Ascending aorta (tissue), 2 donors: ENCODE measurements at regions of chr9 and their contacts with region 1.

Region 1: GRCh38 chr9:21031091-21031807 is at the start of gene HACD4:
- DNase-seq: peak in 1 of 2 donors; percentile 79
- H3K4me3 ChIP-seq: peak within 1 kb of the TSS; percentile 66 to 79
- H3K27ac ChIP-seq: peak within 1 kb of the TSS; percentile 77 to 82
- H3K4me1 ChIP-seq: peaks cover 0 to 4% of the 10 kb centered on the region in 2 donors
- H3K27me3 ChIP-seq: no peaks in the 10 kb centered on the region
- CTCF ChIP-seq: peak in 1 of 3 experiments; percentile 4
- total RNA-seq, gene HACD4: 4.6 TPM

Region 2: DNA sequence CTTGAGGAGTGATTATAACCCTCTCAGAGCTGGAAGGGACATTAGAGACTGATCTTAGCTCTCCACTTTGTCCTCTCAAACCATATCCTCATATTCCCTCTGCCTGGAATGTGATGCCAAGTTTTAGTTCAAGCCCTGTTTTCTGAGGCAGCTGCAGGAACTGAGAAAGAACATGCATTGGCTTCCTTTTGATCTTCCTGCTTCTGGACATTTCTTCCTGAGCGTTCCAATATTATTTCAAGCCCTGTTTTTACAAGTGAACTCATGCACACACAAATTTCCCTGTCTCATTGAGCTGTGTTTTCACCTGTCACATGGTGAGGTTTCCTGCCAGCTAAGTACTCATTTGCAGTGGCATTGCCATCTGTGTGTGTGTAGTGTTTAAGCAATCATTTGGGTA is 330.2 kb before region 1 on chr9:
- intact Hi-C with region 1: no loop called
- DNase-seq: no peak
- H3K4me3 ChIP-seq: no peak overlapping the region
- H3K27ac ChIP-seq: no peak overlapping the region
- H3K4me1 ChIP-seq: peaks cover 0 to 5% of the 10 kb centered on the region in 2 donors
- H3K27me3 ChIP-seq: no peaks in the 10 kb centered on the region
- CTCF ChIP-seq: no peak

Region 3: GRCh38 chr9:20962536-20963225 is 68.6 kb before region 1 on chr9:
- intact Hi-C with region 1: no loop called
- DNase-seq: no peak
- H3K4me3 ChIP-seq: no peak overlapping the region
- H3K27ac ChIP-seq: no peak overlapping the region
- H3K4me1 ChIP-seq: no peaks in the 10 kb centered on the region
- H3K27me3 ChIP-seq: no peaks in the 10 kb centered on the region
- CTCF ChIP-seq: no peak

Region 4: DNA sequence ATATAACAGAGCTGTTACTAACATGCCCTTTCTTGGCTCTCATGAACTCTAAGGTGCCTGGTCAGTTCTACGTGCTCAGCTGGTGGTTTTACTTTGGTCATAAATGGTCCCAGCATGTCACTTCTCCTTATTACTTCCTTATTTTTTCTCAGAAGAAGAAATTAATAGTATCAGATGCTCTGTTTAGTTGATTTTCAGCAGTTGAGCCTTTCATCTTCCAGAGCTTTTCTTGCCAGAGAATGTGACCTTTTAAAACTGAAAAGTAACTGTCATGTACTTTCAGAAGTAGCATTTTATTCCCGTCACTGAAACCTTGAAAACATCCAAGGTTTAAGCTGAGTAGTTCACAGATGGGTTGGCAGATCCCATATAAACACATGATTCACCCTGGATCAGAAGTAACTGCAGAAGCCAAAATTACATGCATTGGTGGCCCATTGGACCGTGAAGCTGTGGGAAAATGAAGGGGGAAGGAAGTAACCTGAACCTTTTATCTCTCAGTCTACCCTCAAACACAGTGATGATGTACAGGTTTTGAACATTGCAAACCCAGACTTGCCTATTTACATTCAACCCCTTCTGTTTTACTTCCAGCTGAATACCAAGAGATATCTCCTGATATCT is 50.3 kb before region 1 on chr9:
- intact Hi-C with region 1: loop called (anchors 5 kb)
- DNase-seq: no peak
- H3K4me3 ChIP-seq: peak overlapping the region; percentile 26 to 31
- H3K27ac ChIP-seq: peak overlapping the region; percentile 64 to 71
- H3K4me1 ChIP-seq: peaks cover 4 to 20% of the 10 kb centered on the region in 2 donors
- H3K27me3 ChIP-seq: no peaks in the 10 kb centered on the region
- CTCF ChIP-seq: no peak

Region 5: DNA sequence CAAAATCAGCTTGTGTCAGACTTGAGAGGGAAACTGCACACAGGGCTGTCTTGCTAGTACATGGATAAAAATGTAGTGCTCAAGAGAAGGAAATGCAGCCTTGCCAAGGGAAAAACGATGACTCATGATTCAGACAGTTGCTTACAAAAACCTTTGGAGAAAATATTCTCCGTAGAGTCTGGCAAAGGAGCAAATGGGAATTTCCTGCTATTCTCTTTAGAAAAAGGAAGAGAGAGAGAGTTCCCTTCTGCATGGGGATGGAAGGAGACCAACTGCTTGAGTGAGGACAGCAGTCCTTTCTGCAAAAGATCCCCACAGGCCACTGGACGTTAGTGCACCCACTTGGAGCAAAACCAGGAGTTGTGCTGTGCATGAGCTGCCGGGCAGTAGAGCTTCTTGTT is 38.9 kb after region 1 on chr9:
- intact Hi-C with region 1: loop called (anchors 2 kb)
- DNase-seq: peak in 1 of 2 donors; percentile 81
- H3K4me3 ChIP-seq: peak overlapping the region; percentile 23 to 32
- H3K27ac ChIP-seq: peak overlapping the region; percentile 9 to 28
- H3K4me1 ChIP-seq: peaks cover 0 to 4% of the 10 kb centered on the region in 2 donors
- H3K27me3 ChIP-seq: no peaks in the 10 kb centered on the region
- CTCF ChIP-seq: peak; percentile 17 to 42 (median 21)